ENCODE measurements at regions of chr5 and their contacts with region 1.

Region 1: GRCh38 chr5:38382898-38383297 is 124.5 kb downstream of the EGFLAM start:
- DNase-seq: peak; percentile 68
- ATAC-seq: peak; percentile 99
- H3K4me3 ChIP-seq: no peak overlapping the region
- H3K27ac ChIP-seq: no peak overlapping the region
- H3K4me1 ChIP-seq: no peaks in the 10 kb centered on the region; the same call in 1 of the 2 replicates
- H3K27me3 ChIP-seq: peaks cover 24% of the 10 kb centered on the region
- CTCF ChIP-seq: peak; percentile 70
- POLR2A ChIP-seq: no peak
- RAD21 ChIP-seq: peak; percentile 71

Region 2: DNA sequence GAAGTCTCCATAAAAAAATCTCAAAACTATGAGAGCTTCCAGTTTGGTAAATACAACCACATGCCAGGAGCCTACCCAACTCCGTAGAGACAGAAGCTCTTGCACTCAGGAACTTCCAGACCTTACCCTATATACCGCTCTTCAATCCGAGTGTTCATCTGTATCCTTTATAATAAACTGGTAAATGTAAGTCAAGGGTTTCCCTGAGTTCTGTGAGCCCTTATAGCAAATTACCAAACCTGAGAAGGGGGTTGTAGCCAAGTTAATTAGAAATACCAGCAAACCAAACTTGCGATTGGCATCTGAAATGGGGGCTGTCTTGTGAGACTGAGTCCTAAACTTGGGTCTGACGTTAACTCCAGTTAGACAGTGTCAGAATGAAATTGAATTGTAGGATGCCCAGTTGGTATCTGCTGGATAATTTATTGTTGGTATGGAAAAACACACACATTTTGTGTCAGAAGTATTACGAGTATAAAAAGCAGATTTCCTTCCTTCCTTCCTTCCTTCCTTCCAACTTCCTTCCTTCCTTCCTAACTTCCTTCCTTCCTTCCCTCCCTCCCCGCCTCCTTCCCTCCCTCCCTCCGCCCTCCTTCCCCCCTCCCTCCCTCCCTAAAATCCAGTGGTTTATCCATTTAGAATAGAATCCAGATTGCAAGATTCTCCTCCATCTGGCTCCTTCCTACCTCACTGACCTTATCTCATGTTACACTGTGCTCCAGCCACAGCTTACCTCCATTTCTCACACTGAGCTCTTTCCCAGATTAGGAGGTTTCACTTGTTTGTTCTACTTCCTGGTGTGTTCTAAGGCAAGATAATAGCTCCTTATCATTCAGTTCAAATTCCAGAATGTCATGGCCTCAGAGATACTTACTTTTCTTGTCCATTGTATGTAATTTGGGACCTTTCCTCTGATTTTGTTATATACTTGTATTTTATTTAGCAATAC is 807.1 kb before region 1 on chr5:
- CTCF ChIA-PET with region 1: no interaction called
- POLR2A ChIA-PET with region 1: no interaction called
- dilution Hi-C with region 1: no loop called
- in situ Hi-C with region 1: no loop called
- intact Hi-C with region 1: no loop called
- DNase-seq: no peak
- ATAC-seq: no peak
- H3K4me3 ChIP-seq: no peak overlapping the region
- H3K27ac ChIP-seq: no peak overlapping the region
- H3K4me1 ChIP-seq: no peaks in the 10 kb centered on the region
- H3K27me3 ChIP-seq: no peaks in the 10 kb centered on the region
- CTCF ChIP-seq: no peak
- POLR2A ChIP-seq: no peak
- RAD21 ChIP-seq: no peak

Region 3: DNA sequence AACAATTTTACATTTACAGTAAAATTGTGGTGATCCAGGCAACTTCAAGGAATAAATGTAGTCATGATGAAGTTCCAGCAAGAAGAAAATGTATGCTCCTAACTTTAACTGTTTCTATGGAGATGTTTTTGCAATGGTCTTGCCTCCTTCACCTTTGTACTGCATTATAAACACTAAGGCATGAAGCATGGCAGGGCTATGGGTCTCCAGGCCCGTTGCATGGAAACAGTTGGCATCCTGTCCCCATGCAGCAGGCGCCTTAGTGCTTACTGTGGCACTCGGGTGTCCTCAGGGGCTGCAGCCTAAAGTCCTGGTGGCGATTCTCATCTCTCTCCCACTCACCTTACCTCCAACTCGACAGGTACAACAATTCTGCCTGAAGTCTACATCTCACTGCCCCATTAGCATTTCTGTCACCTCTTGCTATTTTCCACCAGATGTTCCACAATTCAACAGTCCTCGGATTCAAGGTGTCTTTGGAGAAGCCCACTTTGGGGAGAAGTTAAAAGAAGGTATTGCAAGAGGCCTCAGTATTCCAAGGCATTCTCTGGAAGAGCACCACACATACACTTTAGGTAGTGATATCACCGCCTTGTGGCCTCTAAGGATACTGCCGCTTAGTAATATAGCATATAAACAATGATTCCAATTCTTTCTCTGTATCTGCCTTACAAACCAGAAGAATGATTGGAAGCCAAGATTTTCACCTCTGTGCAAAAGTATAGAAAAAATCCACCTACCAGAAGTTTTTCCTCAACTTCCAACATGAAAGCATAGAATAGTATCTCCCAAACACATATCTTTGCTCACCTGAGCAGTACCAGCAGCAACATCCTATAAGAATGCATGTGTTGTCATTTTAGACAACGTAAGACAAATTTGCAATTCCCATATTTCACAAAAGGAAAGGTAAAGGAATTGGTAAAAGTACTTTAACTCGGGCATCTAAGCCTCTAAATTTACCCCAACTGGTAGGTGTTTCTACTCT is 168.4 kb after region 1 on chr5:
- CTCF ChIA-PET with region 1: interaction called, 4 read pairs
- POLR2A ChIA-PET with region 1: no interaction called
- dilution Hi-C with region 1: no loop called
- in situ Hi-C with region 1: no loop called
- intact Hi-C with region 1: loop called (anchors 5 kb)
- DNase-seq: peak; percentile 73
- ATAC-seq: 0 out of 2 replicates have a peak, but pooled peaks have one; percentile 25
- H3K4me3 ChIP-seq: no peak overlapping the region
- H3K27ac ChIP-seq: no peak overlapping the region
- H3K4me1 ChIP-seq: peaks cover 13% of the 10 kb centered on the region
- H3K27me3 ChIP-seq: no peaks in the 10 kb centered on the region
- CTCF ChIP-seq: peak; percentile 71
- POLR2A ChIP-seq: no peak
- RAD21 ChIP-seq: peak; percentile 69

Region 4: DNA sequence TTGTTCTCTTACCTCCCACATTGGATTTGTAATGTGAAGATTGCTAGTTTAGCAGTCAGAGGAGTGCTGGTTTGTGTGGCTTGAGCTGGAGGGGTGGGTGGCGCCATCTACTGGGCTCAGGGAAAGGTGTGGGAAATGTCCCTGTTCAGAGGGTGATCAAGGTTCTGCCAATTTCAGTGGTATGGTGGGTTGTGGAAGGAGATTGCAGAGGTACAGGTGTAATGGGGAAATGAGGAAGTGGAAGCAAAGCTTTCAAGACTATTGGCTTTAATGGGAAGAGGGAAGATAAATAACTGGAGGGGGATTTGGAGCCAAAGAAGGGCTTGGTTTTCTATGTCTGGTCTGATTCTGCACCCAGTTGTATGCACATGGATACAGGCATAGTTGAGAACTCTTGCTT is 539.3 kb after region 1 on chr5:
- CTCF ChIA-PET with region 1: interaction called, 3 read pairs
- POLR2A ChIA-PET with region 1: no interaction called
- dilution Hi-C with region 1: no loop called
- in situ Hi-C with region 1: no loop called
- intact Hi-C with region 1: loop called (anchors 1 kb)
- DNase-seq: peak; percentile 51
- ATAC-seq: peak; percentile 43
- H3K4me3 ChIP-seq: no peak overlapping the region
- H3K27ac ChIP-seq: no peak overlapping the region
- H3K4me1 ChIP-seq: peaks cover 12% of the 10 kb centered on the region
- H3K27me3 ChIP-seq: no peaks in the 10 kb centered on the region
- CTCF ChIP-seq: peak; percentile 65
- POLR2A ChIP-seq: no peak
- RAD21 ChIP-seq: peak; percentile 77

Region 5: DNA sequence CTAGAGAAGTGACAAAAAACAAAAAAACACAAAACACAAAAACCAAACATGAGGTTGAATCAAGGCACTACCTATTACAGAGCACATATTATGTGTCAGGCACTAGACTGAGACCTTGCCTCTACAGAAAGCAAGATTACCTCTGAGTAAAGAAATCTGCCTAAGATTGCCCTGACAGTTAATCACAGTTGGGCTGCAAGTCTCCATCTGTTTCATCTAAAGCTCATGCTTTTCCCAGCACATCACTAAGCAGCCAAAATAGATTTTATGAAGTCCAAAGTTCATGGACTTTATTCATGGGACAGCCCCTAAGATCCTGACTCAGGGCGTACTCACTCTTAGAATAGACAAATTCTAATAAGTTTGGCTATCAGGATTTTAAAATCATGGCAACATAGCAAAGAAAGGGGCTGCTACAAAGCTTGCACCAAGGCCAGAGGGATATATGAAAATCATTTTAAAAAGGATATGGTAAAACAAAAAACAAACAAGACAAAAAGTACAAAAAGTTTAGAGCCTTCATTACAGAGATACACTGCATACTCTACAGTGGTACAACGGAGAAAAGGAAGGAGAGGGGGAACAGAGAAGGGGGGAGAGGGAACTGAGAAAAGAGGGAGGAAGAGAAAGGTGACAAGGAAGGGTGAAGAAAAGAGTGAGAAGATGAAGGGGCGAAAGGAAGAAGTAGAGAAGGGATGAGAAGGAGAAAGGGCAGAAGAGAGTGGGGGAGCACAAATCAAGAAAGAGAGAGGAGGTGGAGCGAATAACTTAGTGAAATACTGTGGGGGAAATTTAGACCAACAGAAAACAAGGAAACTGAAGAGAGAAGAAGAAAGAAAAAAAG is 633.1 kb after region 1 on chr5:
- CTCF ChIA-PET with region 1: interaction called, 10 read pairs
- POLR2A ChIA-PET with region 1: no interaction called
- dilution Hi-C with region 1: no loop called
- in situ Hi-C with region 1: no loop called
- intact Hi-C with region 1: no loop called
- DNase-seq: peak; percentile 90
- ATAC-seq: peak; percentile 77
- H3K4me3 ChIP-seq: no peak overlapping the region
- H3K27ac ChIP-seq: peak overlapping the region; percentile 50
- H3K4me1 ChIP-seq: peaks cover 5% of the 10 kb centered on the region
- H3K27me3 ChIP-seq: no peaks in the 10 kb centered on the region
- CTCF ChIP-seq: no peak
- POLR2A ChIP-seq: no peak
- RAD21 ChIP-seq: no peak

Region 6: DNA sequence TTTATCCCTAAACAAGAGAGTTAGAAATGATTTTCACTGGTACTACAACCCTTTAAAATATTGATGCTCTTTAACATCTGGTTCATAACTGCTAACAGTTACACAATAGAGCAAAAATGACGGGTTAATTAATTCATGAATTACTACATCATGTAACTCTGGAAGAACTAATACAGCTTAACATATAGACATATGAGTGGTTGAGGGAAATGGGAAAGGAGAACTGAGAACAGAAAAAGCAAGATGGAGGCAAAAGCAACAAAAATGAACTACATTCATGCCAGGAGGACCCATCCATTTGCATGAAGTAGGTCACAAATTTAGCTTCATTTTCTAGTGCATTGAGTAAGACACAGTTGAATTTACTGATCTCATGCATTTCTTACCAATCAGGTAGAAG is 919.6 kb after region 1 on chr5:
- CTCF ChIA-PET with region 1: no interaction called
- POLR2A ChIA-PET with region 1: no interaction called
- dilution Hi-C with region 1: no loop called
- in situ Hi-C with region 1: loop called (anchors 25 kb)
- intact Hi-C with region 1: no loop called
- DNase-seq: no peak
- ATAC-seq: no peak
- H3K4me3 ChIP-seq: no peak overlapping the region
- H3K27ac ChIP-seq: no peak overlapping the region
- H3K4me1 ChIP-seq: no peaks in the 10 kb centered on the region
- H3K27me3 ChIP-seq: peaks cover 5% of the 10 kb centered on the region
- CTCF ChIP-seq: no peak
- POLR2A ChIP-seq: no peak
- RAD21 ChIP-seq: no peak